Right cardiac atrium (tissue), 5 donors: ENCODE measurements at regions of chr2 and their contacts with region 1.

Region 1: GRCh38 chr2:189569295-189569910 is 11.2 kb downstream of the SLC40A1 start:
- DNase-seq: no peak
- ATAC-seq: peak in 1 of 2 donors; percentile 38
- H3K4me3 ChIP-seq: no peak overlapping the region
- H3K27ac ChIP-seq: no peak overlapping the region
- H3K4me1 ChIP-seq: peaks cover 2% of the 10 kb centered on the region
- H3K27me3 ChIP-seq: no peaks in the 10 kb centered on the region

Region 2: GRCh38 chr2:188922191-188922590 is 647.2 kb before region 1 on chr2:
- intact Hi-C with region 1: no loop called
- DNase-seq: no peak
- ATAC-seq: peak in 1 of 2 donors; percentile 84
- H3K4me3 ChIP-seq: no peak overlapping the region
- H3K27ac ChIP-seq: no peak overlapping the region
- H3K4me1 ChIP-seq: no peaks in the 10 kb centered on the region
- H3K27me3 ChIP-seq: no peaks in the 10 kb centered on the region

Region 3: DNA sequence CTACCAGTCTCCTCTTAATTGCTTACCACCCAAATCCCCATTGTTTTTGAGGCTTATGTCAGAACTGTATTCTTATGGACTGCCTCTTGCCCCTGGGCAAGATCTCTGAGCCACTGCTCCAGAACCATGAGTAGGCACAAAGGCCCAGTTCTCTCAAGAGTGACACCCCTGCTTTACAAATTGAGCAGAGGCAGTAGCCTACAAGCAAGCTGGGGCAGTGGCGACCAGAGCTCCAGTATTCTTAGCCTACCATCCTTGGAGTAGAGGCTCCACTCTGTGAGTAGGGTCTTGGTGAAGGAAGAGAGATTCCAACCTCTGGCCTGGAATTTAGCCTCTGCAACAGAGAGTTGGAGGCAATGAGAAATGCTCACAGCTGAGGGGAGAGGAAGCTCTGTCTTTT is 91.6 kb before region 1 on chr2:
- intact Hi-C with region 1: loop called in 1 of 4 experiments (anchors 10 kb)
- DNase-seq: no peak
- ATAC-seq: no peak
- H3K4me3 ChIP-seq: no peak overlapping the region
- H3K27ac ChIP-seq: no peak overlapping the region
- H3K4me1 ChIP-seq: no peaks in the 10 kb centered on the region
- H3K27me3 ChIP-seq: no peaks in the 10 kb centered on the region